Activated CD8-positive, alpha-beta T cell treated with anti-CD3 and anti-CD28 coated beads for 36 hours (primary cell): ENCODE measurements at regions of chr4 and their contacts with region 1.

Region 1: DNA sequence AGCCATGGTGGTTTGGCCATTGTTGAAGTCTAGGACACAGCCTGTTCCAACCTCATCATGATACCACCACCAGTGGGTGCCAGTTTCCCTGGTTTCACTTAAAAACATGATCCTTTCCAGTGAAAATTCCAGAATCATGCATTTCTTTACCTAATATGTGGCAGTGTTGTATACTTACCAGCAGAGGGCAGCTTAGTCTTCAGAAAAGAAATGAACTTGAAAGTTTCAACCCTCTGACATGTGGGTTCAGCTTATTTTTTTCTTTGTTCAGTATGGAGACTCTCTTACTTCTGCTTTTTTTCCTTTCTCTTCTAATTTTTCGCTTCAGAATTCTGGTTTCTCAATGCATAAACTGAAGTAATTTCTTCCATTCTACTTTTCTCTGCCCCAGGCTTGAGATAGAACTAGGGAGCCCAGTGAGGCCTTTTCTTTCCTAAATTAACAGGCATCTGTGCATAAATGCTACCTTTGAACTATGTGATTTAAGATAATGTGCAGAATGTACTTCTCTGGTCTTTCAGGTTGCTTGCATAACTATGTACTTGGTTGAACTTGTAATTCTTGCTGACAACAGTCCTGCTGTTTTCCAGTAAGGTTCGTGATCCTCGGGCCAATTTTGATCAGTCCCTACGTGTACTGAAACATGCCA is 10.7 kb downstream of the LIAS start:
- DNase-seq: peak; percentile 16
- ATAC-seq: peak; percentile 79
- H3K4me3 Mint-ChIP-seq: no peak overlapping the region
- H3K27ac Mint-ChIP-seq: peak overlapping the region; percentile 60
- H3K4me1 Mint-ChIP-seq: peaks cover 8% of the 10 kb centered on the region
- H3K27me3 Mint-ChIP-seq: no peaks in the 10 kb centered on the region
- CTCF ChIP-seq: peak; percentile 94

Region 2: DNA sequence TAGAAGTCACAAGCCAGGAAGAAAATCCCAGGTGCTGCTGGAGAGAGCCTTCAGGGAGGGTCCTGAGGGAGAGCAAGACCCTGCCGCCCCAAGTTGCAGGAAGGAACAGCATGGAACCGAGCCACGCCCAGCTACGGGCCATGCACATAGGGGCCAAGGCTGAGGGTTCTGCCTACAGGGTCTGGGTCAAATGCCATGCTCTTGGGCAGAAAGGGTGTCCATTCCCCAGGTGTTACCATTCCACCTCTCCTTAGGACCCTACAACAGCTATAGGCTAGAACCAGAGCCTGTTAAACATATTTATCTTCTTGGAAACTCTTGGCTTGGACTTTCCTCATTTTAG is 33.4 kb before region 1 on chr4:
- CTCF ChIA-PET with region 1: interaction called, 14 read pairs
- POLR2A ChIA-PET with region 1: no interaction called
- intact Hi-C with region 1: no loop called
- DNase-seq: no peak
- ATAC-seq: no peak
- H3K4me3 Mint-ChIP-seq: no peak overlapping the region
- H3K27ac Mint-ChIP-seq: no peak overlapping the region
- H3K4me1 Mint-ChIP-seq: no peaks in the 10 kb centered on the region
- H3K27me3 Mint-ChIP-seq: peaks cover 1% of the 10 kb centered on the region
- CTCF ChIP-seq: no peak